T-cell (primary cell): ENCODE measurements at regions of chr7 and their contacts with region 1.

Region 1: GRCh38 chr7:3301831-3302618 is 973 bp downstream of the SDK1 start:
- DNase-seq: peak in 11 of 35 experiments; percentile 2 to 34 (median 4)
- ATAC-seq: no peak
- H3K4me3 ChIP-seq: peak overlapping the region; percentile 39 to 79
- H3K4me3 Mint-ChIP-seq: peak overlapping the region; percentile 75 to 79 (median 76)
- H3K27ac ChIP-seq: no peak overlapping the region
- H3K27ac Mint-ChIP-seq: peak overlapping the region in 1 of 2 donors; percentile 1
- H3K4me1 ChIP-seq: peaks cover 10 to 21% of the 10 kb centered on the region in 2 experiments
- H3K4me1 Mint-ChIP-seq: peaks cover 11 to 16% (median 12%) of the 10 kb centered on the region in 3 donors
- H3K27me3 ChIP-seq: peaks cover 3 to 20% of the 10 kb centered on the region in 2 experiments
- H3K27me3 Mint-ChIP-seq: peaks cover 4 to 28% of the 10 kb centered on the region in 2 donors

Region 2: DNA sequence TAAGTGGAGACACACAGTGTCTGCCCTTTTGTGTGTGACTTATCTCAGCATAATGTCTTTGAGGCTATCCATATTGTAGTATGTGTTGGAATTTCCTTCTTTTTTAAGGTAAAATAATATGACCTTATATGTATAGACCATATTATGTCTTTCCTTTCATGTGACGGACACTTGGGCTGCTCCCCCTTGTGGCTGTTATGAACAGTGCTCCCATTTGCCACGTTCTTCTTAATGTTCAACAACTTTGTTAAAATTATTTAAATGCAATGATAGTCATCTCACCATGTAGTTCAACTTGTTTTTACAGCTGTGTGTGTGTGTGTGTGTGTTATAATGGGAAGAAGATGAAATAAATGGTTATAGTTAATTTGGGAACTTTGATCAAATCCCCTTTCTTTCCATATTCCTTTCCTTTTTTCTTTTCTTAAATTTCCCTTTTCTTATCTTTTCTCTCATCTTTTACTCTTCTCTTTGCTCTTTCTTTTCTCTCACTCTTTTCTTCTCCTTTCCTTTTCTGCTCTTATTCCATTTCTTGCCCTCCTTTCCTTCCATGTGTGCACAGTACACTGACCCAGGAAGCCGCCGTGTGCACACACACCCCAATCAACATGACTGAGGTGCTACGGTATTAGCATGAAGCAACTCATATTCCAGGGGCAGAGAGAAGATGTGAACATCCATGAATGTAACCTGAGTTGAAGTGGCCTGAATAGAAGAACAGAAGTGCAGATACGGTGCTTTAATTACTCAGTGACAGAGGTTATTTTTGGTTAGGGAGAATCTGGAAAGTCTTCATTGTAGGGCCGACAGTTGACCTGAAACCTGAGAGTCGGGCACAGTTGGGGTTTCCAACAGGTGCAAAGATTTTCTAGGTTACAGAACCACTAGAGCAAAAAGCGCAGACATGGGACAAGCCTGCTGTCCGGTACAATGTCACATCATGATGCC is 595.7 kb after region 1 on chr7:
- CTCF ChIA-PET with region 1: interaction called, 3 to 10 read pairs
- POLR2A ChIA-PET with region 1: no interaction called
- DNase-seq: peak in 27 of 35 experiments; percentile 5 to 73 (median 31)
- ATAC-seq: peak; percentile 52 to 60 (median 59)
- H3K4me3 ChIP-seq: no peak overlapping the region
- H3K4me3 Mint-ChIP-seq: no peak overlapping the region
- H3K27ac ChIP-seq: no peak overlapping the region
- H3K27ac Mint-ChIP-seq: no peak overlapping the region
- H3K4me1 ChIP-seq: no peaks in the 10 kb centered on the region
- H3K4me1 Mint-ChIP-seq: no peaks in the 10 kb centered on the region
- H3K27me3 ChIP-seq: peaks cover 3 to 7% of the 10 kb centered on the region in 2 experiments
- H3K27me3 Mint-ChIP-seq: peaks cover 5 to 10% of the 10 kb centered on the region in 2 donors